HEK293 (cell line): ENCODE measurements at regions of chr16 and their contacts with region 1.

Region 1: GRCh38 chr16:24525970-24526559 is 13.3 kb upstream of the RBBP6 start:
- H3K4me3 ChIP-seq: no peak overlapping the region
- H3K27ac ChIP-seq: no peak overlapping the region
- H3K4me1 ChIP-seq: no peaks in the 10 kb centered on the region
- CTCF ChIP-seq: no peak

Region 2: GRCh38 chr16:24537474-24538337 is 11.6 kb after region 1 on chr16:
- CTCF ChIA-PET with region 1: interaction called, 12 read pairs
- POLR2A ChIA-PET with region 1: no interaction called
- H3K4me3 ChIP-seq: no peak overlapping the region
- H3K27ac ChIP-seq: no peak overlapping the region
- H3K4me1 ChIP-seq: peaks cover 3% of the 10 kb centered on the region; the same call in 1 of the 2 replicates
- CTCF ChIP-seq: no peak